Activated CD8-positive, alpha-beta T cell treated with anti-CD3 and anti-CD28 coated beads, Interleukin-2, amount 10 ng/mL, durations not matched to agents 7 days and 5 days (primary cell): ENCODE measurements at regions of chr14 and their contacts with region 1.

Region 1: GRCh38 chr14:32259368-32260013 is 56.4 kb upstream of the RNU6-8 start:
- DNase-seq: peak; percentile 31
- ATAC-seq: peak; percentile 73
- H3K4me3 Mint-ChIP-seq: peak overlapping the region; percentile 2
- H3K27ac Mint-ChIP-seq: peak overlapping the region; percentile 43
- H3K4me1 Mint-ChIP-seq: peaks cover 21% of the 10 kb centered on the region
- H3K27me3 Mint-ChIP-seq: no peaks in the 10 kb centered on the region

Region 2: DNA sequence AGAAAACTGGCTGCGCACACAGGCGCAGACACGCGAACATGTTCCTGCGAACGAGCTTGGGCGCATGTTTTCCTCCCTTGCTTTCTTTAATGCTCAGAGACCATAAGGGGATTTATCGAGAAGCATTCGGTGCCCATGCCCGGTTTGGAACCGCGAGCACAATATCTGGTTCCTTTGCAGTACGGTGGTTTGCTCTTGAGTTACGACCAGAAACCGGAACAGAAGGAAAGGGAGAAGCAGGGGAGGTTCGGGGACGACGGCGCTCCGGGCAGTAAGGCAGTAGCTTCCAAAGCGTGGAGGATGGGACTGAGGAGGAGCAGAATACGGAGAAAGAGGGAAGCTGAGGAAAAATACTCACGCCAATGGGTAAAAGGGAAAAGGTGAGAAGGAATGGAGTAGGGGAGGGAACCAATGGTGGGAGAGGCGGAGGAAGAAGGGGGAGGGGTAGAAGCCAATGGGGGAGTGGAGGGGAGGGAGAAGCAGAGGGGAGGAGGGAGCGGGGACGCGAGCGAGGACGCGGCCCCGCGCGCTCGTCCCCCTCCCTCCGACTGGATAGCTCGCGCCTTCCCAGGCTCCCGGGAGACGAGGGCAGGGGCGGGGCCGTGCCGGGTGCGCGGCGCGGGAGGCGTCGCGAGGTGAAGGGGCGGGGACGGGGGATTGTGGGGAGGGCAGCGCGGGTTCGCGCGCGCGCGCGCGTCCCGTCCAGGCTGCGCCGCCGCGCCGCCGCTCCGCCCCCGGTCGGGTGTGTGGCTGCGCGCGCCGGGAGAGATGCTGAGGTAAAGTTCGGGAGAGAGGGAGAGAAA is 183.0 kb before region 1 on chr14:
- CTCF ChIA-PET with region 1: interaction called, 211 read pairs
- POLR2A ChIA-PET with region 1: no interaction called
- DNase-seq: peak; percentile 80
- ATAC-seq: peak; percentile 67
- H3K4me3 Mint-ChIP-seq: peak overlapping the region; percentile 93
- H3K27ac Mint-ChIP-seq: peak overlapping the region; percentile 83
- H3K4me1 Mint-ChIP-seq: peaks cover 31% of the 10 kb centered on the region
- H3K27me3 Mint-ChIP-seq: peaks cover 5% of the 10 kb centered on the region

Region 3: GRCh38 chr14:32469388-32470160 is 210.1 kb after region 1 on chr14:
- CTCF ChIA-PET with region 1: interaction called, 12 read pairs
- POLR2A ChIA-PET with region 1: no interaction called
- DNase-seq: no peak
- ATAC-seq: no peak
- H3K4me3 Mint-ChIP-seq: no peak overlapping the region
- H3K27ac Mint-ChIP-seq: no peak overlapping the region
- H3K4me1 Mint-ChIP-seq: no peaks in the 10 kb centered on the region
- H3K27me3 Mint-ChIP-seq: peaks cover 10% of the 10 kb centered on the region

Region 4: DNA sequence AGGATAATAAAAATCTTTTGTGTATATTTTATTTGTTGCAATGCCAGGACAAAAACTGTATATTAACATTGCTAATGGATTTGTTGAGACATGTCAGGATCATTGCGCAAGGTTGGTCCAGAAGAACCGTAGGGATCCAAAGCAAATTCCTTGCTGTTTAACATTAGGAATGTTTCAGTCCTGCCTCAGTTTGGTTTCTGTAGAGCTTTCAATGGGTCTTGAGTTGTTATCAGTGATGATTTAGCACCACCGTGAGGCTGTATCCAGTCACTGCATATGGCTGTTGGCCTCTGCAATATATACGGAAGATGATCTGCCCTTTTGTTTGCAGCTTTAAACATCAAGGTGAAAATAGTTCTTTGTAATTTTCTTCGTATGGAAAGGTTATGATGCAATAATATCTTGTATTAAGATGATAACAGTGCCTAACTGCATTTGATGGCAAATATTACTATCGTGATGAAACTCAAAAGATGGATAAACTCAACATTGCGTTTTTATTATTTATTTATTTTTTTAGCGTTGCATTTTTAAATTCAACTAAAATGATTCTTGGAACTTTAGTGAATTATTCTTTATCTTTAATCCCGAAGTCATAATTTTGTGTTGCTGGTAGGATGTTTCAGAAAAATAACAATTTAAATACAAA is 300.8 kb after region 1 on chr14:
- CTCF ChIA-PET with region 1: interaction called, 11 read pairs
- POLR2A ChIA-PET with region 1: no interaction called
- DNase-seq: peak; percentile 57
- ATAC-seq: peak; percentile 60
- H3K4me3 Mint-ChIP-seq: no peak overlapping the region
- H3K27ac Mint-ChIP-seq: no peak overlapping the region
- H3K4me1 Mint-ChIP-seq: peaks cover 14% of the 10 kb centered on the region
- H3K27me3 Mint-ChIP-seq: no peaks in the 10 kb centered on the region